Activated CD4-positive, alpha-beta memory T cell treated with anti-CD3 and anti-CD28 coated beads, Interleukin-2, amount 10 ng/mL, durations not matched to agents 7 days and 5 days (primary cell): ENCODE measurements at regions of chr3 and their contacts with region 1.

Region 1: DNA sequence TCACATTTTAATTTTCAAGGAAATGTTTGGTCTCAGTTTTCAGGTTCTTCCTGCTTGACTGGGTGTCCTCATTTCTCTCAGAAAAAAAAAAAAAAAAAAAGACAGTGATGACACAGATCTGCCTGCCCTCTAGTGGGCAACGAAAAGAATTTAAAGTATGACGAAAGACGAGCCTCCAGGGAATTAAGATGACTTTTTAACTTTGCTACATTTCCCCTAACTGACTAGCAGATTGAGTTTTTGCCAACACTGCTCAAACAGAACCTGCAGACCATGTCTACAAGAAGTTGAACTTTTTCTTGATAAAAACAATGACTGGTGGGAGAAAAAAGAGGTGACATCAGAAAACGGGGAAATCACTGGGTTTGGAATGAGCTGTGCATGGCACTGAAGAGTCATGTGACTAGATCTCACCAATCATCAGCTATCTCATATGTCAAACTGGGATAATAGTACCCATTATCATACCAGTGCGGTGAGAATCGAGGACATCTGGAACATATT is 40.8 kb downstream of the EOMES start:
- DNase-seq: peak; percentile 39
- H3K4me3 Mint-ChIP-seq: peak overlapping the region; percentile 44
- H3K27ac Mint-ChIP-seq: peak overlapping the region; percentile 33
- H3K4me1 Mint-ChIP-seq: peaks cover 18% of the 10 kb centered on the region
- H3K27me3 Mint-ChIP-seq: no peaks in the 10 kb centered on the region

Region 2: DNA sequence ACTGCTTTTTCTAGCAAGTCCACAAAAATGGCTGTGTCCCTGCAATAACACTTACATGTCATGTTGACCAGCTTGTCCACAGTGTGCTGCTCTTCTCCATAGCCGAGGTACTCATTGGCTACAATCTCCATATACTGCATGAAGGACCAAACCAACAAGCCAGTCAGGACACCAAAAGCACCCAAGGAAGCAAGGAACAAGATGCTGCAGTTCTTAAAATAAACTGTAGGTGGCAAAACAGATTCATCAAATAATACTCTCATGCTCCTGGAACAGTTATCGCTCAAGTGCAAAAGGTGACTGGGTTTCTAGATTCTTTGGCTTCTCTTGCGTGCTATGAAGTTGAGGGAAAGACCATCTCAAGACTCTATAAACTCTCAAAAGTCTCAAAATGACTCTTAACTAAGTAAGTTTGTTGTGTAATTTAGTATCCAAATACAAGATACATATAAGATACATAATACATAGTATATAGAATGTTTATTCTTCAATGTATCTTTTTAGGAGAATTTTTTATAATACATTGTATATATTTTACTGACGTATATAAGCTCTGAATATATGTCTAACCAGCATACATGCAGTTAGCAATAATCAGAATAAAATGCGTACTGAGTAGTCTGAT is 369.1 kb before region 1 on chr3:
- CTCF ChIA-PET with region 1: interaction called, 56 read pairs
- POLR2A ChIA-PET with region 1: no interaction called
- DNase-seq: no peak
- H3K4me3 Mint-ChIP-seq: no peak overlapping the region
- H3K27ac Mint-ChIP-seq: no peak overlapping the region
- H3K4me1 Mint-ChIP-seq: no peaks in the 10 kb centered on the region
- H3K27me3 Mint-ChIP-seq: no peaks in the 10 kb centered on the region

Region 3: GRCh38 chr3:27368831-27369607 is 312.3 kb before region 1 on chr3 and contains the start of gene NEK10:
- CTCF ChIA-PET with region 1: interaction called, 11 read pairs
- POLR2A ChIA-PET with region 1: interaction called, 3 read pairs
- DNase-seq: peak; percentile 92
- H3K4me3 Mint-ChIP-seq: peak within 1 kb of the TSS; percentile 93
- H3K27ac Mint-ChIP-seq: peak within 1 kb of the TSS; percentile 66
- H3K4me1 Mint-ChIP-seq: peaks cover 18% of the 10 kb centered on the region
- H3K27me3 Mint-ChIP-seq: peaks cover 3% of the 10 kb centered on the region
- total RNA-seq, gene NEK10: 0.35 to 0.86 TPM

Region 4: GRCh38 chr3:27484015-27484844 is 197.1 kb before region 1 on chr3 and contains the start of gene SLC4A7:
- CTCF ChIA-PET with region 1: interaction called, 16 read pairs
- POLR2A ChIA-PET with region 1: interaction called, 4 read pairs
- DNase-seq: peak; percentile 99
- H3K4me3 Mint-ChIP-seq: peak within 1 kb of the TSS; percentile 100
- H3K27ac Mint-ChIP-seq: peak within 1 kb of the TSS; percentile 98
- H3K4me1 Mint-ChIP-seq: peaks cover 36% of the 10 kb centered on the region
- H3K27me3 Mint-ChIP-seq: no peaks in the 10 kb centered on the region
- total RNA-seq, gene SLC4A7: 74.7 to 75.5 TPM

Region 5: GRCh38 chr3:27632431-27633223 is 48.7 kb before region 1 on chr3:
- CTCF ChIA-PET with region 1: interaction called, 18 read pairs
- POLR2A ChIA-PET with region 1: interaction called, 5 read pairs
- DNase-seq: peak; percentile 51
- H3K4me3 Mint-ChIP-seq: peak overlapping the region; percentile 81
- H3K27ac Mint-ChIP-seq: peak overlapping the region; percentile 89
- H3K4me1 Mint-ChIP-seq: peaks cover 50% of the 10 kb centered on the region
- H3K27me3 Mint-ChIP-seq: no peaks in the 10 kb centered on the region

Region 6: DNA sequence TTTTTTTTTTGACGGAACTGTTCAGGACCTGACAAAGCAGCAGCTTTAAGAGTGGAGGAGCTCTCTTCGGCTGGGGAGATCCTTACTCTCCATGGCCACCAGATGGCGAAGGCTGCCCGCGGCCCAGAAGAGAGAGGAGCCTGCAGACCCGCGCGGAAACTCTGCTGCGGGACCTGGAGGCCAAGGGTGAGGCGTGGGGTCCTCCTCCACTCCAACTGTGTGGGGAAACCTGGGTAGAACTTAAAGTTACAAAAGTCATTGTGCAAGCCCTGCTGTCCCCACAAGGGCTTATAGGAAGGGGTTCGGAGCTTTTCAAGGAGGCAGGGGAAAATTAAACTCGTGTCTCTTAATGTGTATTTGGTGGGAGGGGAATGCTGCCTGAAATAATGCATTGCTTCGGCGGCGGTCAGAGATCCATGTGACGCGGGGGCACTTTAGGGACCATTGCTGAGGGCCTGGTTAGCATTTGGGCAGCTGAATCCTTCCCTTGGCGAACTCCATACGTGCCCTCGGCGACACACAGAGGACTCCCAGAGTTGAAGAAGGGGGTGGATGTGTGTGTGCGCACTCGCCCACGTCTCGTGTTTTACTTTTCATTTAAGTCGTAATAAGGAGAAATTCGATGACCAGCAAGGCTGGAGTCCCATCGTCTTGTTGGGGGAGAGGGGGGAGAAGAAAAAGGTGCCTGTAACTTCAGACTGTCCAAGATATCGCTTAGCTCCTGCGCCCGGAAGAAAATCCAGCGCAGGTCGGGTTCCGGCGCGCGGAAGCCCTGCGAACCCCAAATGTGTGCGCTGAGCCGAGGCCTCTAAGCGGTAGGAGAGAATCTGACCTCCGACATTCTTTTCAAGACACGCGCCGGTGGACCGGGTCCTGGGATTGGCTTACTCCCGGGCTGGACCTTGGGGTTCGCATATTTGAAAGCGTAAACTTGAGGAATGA is 31.1 kb after region 1 on chr3:
- CTCF ChIA-PET with region 1: interaction called, 16 read pairs
- POLR2A ChIA-PET with region 1: no interaction called
- DNase-seq: peak; percentile 84
- H3K4me3 Mint-ChIP-seq: peak overlapping the region; percentile 79
- H3K27ac Mint-ChIP-seq: peak overlapping the region; percentile 64
- H3K4me1 Mint-ChIP-seq: peaks cover 35% of the 10 kb centered on the region
- H3K27me3 Mint-ChIP-seq: peaks cover 49% of the 10 kb centered on the region

Region 7: DNA sequence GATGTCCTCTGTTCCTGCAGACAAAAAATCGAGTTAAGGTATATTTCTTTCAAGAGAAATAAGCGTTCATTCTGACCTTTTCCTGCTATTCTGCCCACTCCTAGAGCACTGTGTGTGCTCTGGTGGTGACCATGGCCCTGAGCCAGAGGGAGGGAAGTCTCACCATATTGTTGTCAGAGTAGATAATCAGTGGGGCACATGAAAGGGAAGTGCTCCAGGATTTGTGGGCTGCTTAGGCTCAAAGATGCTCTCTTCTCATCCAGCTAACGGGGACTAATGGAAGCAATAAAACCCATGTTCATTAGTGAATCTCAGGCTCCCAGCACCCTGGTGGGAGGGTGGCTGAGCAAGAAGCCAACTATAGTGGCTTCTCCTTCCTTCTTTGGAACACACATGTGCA is 111.6 kb after region 1 on chr3:
- CTCF ChIA-PET with region 1: no interaction called
- POLR2A ChIA-PET with region 1: no interaction called
- DNase-seq: no peak
- H3K4me3 Mint-ChIP-seq: no peak overlapping the region
- H3K27ac Mint-ChIP-seq: no peak overlapping the region
- H3K4me1 Mint-ChIP-seq: no peaks in the 10 kb centered on the region
- H3K27me3 Mint-ChIP-seq: no peaks in the 10 kb centered on the region